Pancreas (tissue), 10 donors: ENCODE measurements at regions of chr18 and their contacts with region 1.

Region 1: DNA sequence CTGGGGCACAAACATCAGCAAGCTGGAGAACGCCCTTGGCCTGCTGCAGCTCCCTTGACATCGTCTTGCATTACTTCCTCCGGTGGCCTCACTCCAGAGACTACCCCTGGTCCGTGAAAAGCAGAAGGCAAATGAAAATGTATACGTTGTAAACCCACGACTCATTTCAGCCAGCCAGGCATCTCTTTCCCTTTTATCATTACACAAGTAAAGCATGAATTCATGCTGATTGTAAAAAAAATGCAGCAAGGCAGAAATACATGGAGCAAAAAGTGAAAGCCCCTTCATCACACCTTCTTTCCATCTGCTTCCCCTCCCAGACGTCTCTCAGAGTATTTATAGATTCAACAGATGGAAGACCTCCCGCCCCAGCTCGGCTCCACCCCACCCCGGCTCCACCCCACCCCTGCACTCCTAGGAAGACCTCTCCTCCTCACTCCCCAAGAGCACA is 41.6 kb upstream of the RALBP1 start:
- DNase-seq: no peak
- ATAC-seq: no peak
- H3K4me3 ChIP-seq: no peak overlapping the region
- H3K27ac ChIP-seq: no peak overlapping the region
- H3K4me1 ChIP-seq: no peaks in the 10 kb centered on the region
- H3K27me3 ChIP-seq: no peaks in the 10 kb centered on the region
- CTCF ChIP-seq: no peak

Region 2: GRCh38 chr18:9516437-9517064 is 82.9 kb after region 1 on chr18:
- intact Hi-C with region 1: no loop called
- DNase-seq: no peak
- ATAC-seq: peak in 3 of 4 donors; percentile 66 to 90 (median 82)
- H3K4me3 ChIP-seq: no peak overlapping the region
- H3K27ac ChIP-seq: no peak overlapping the region
- H3K4me1 ChIP-seq: no peaks in the 10 kb centered on the region
- H3K27me3 ChIP-seq: no peaks in the 10 kb centered on the region
- CTCF ChIP-seq: peak; percentile 31 to 83 (median 70)

Region 3: DNA sequence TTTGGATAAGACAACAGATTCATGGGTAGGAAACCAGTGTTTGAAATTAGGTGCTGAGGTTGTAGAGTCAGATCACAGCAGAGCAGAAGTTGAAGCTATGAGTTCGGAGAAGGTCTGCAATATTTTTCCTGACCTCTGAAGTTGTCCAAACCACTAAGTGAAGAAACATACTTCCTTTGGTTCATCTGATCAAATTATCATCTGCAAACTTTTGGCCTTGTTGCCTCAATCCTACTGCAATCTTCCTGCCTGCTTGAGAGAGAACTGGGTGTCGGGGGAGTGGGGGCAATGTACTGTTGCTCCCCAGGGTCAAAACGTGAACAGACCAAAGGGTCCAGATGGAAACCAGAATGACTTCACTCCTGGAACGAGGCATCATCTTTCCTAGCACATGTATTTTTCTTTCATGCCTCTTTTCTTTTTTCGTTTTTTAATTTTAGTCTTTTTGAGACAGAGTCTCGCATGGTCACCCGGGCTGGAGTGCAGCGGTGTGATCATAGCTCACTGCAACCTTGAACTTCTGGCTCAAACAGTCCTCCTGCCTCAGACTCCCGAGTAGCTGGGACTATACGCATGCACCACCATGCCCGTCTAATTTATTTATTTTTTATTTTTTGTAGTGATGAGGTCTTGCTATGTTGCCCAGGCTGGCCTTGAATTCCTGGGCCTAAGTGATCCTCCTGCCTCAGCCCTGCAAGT is 317.1 kb after region 1 on chr18:
- intact Hi-C with region 1: no loop called
- DNase-seq: no peak
- ATAC-seq: peak in 1 of 4 donors; percentile 49
- H3K4me3 ChIP-seq: no peak overlapping the region
- H3K27ac ChIP-seq: no peak overlapping the region
- H3K4me1 ChIP-seq: no peaks in the 10 kb centered on the region
- H3K27me3 ChIP-seq: no peaks in the 10 kb centered on the region
- CTCF ChIP-seq: no peak

Region 4: GRCh38 chr18:10437837-10438236 is 1004.1 kb after region 1 on chr18:
- intact Hi-C with region 1: loop called in 1 of 3 experiments (anchors 10 kb)
- DNase-seq: no peak
- ATAC-seq: peak in 1 of 4 donors; percentile 54
- H3K4me3 ChIP-seq: no peak overlapping the region
- H3K27ac ChIP-seq: no peak overlapping the region
- H3K4me1 ChIP-seq: no peaks in the 10 kb centered on the region
- H3K27me3 ChIP-seq: no peaks in the 10 kb centered on the region
- CTCF ChIP-seq: peak in 1 of 4 donors; percentile 29